Calu3 (cell line): ENCODE measurements at regions of chr10 and their contacts with region 1.

Region 1: GRCh38 chr10:88138319-88138848 is 275.0 kb downstream of the PTEN start:
- DNase-seq: no peak
- H3K4me3 Mint-ChIP-seq: no peak overlapping the region
- H3K27ac Mint-ChIP-seq: no peak overlapping the region
- H3K4me1 Mint-ChIP-seq: no peaks in the 10 kb centered on the region
- H3K27me3 Mint-ChIP-seq: no peaks in the 10 kb centered on the region
- CTCF ChIP-seq: no peak

Region 2: GRCh38 chr10:87794285-87794684 is 344.1 kb before region 1 on chr10:
- CTCF ChIA-PET with region 1: no interaction called
- intact Hi-C with region 1: no loop called
- DNase-seq: no peak
- H3K4me3 Mint-ChIP-seq: no peak overlapping the region
- H3K27ac Mint-ChIP-seq: no peak overlapping the region
- H3K4me1 Mint-ChIP-seq: no peaks in the 10 kb centered on the region
- H3K27me3 Mint-ChIP-seq: no peaks in the 10 kb centered on the region
- CTCF ChIP-seq: no peak

Region 3: GRCh38 chr10:88157981-88158465 is 19.6 kb after region 1 on chr10:
- CTCF ChIA-PET with region 1: no interaction called
- intact Hi-C with region 1: loop called (anchors 1 kb)
- DNase-seq: no peak
- H3K4me3 Mint-ChIP-seq: no peak overlapping the region
- H3K27ac Mint-ChIP-seq: no peak overlapping the region
- H3K4me1 Mint-ChIP-seq: peaks cover 20% of the 10 kb centered on the region
- H3K27me3 Mint-ChIP-seq: no peaks in the 10 kb centered on the region
- CTCF ChIP-seq: no peak

Region 4: GRCh38 chr10:88196291-88196690 is 57.9 kb after region 1 on chr10:
- CTCF ChIA-PET with region 1: no interaction called
- intact Hi-C with region 1: no loop called
- DNase-seq: no peak
- H3K4me3 Mint-ChIP-seq: no peak overlapping the region
- H3K27ac Mint-ChIP-seq: no peak overlapping the region
- H3K4me1 Mint-ChIP-seq: no peaks in the 10 kb centered on the region
- H3K27me3 Mint-ChIP-seq: no peaks in the 10 kb centered on the region
- CTCF ChIP-seq: no peak